Activated T-helper 1 cell treated with anti-CD3 and anti-CD28 coated beads, Interleukin-12 subunit alpha, Interleukin-12 subunit beta, Interleukin-2, Interleukin-4 antibody, amounts not matched to agents 30 ng/mL and 10 ng/mL and 1 ng/mL, durations not matched to agents 14 hours and 24 hours and 36 hours (primary cell): ENCODE measurements at regions of chr1 and their contacts with region 1.

Region 1: GRCh38 chr1:246566128-246566812 is at the starts of genes CNST and TFB2M:
- DNase-seq: peak; percentile 93
- H3K4me3 Mint-ChIP-seq: peak within 1 kb of the TSS; percentile 98
- H3K27ac Mint-ChIP-seq: peak within 1 kb of the TSS; percentile 99
- H3K4me1 Mint-ChIP-seq: peaks cover 48% of the 10 kb centered on the region
- H3K27me3 Mint-ChIP-seq: no peaks in the 10 kb centered on the region
- total RNA-seq, gene CNST: 27.0 and 30.8 TPM in 2 replicates
- total RNA-seq, gene TFB2M: 24.8 and 30.9 TPM in 2 replicates

Region 2: GRCh38 chr1:244835276-244836134 is 1730.8 kb before region 1 on chr1 and contains the start of gene COX20:
- intact Hi-C with region 1: loop called (anchors 1 kb)
- DNase-seq: peak; percentile 85
- H3K4me3 Mint-ChIP-seq: peak within 1 kb of the TSS; percentile 96
- H3K27ac Mint-ChIP-seq: peak within 1 kb of the TSS; percentile 99
- H3K4me1 Mint-ChIP-seq: peaks cover 56% of the 10 kb centered on the region
- H3K27me3 Mint-ChIP-seq: no peaks in the 10 kb centered on the region
- total RNA-seq, gene COX20: 27.4 and 27.6 TPM in 2 replicates

Region 3: GRCh38 chr1:245953876-245954660 is 612.2 kb before region 1 on chr1:
- intact Hi-C with region 1: loop called (anchors 5 kb)
- DNase-seq: no peak
- H3K4me3 Mint-ChIP-seq: peak overlapping the region; percentile 75
- H3K27ac Mint-ChIP-seq: peak overlapping the region; percentile 88
- H3K4me1 Mint-ChIP-seq: peaks cover 26% of the 10 kb centered on the region
- H3K27me3 Mint-ChIP-seq: no peaks in the 10 kb centered on the region

Region 4: GRCh38 chr1:246554201-246554600 is 12.1 kb before region 1 on chr1:
- intact Hi-C with region 1: no loop called
- DNase-seq: no peak
- H3K4me3 Mint-ChIP-seq: no peak overlapping the region
- H3K27ac Mint-ChIP-seq: no peak overlapping the region
- H3K4me1 Mint-ChIP-seq: peaks cover 5% of the 10 kb centered on the region
- H3K27me3 Mint-ChIP-seq: no peaks in the 10 kb centered on the region

Region 5: GRCh38 chr1:246608616-246609376 is 42.5 kb after region 1 on chr1:
- intact Hi-C with region 1: loop called (anchors 2 kb)
- DNase-seq: no peak
- H3K4me3 Mint-ChIP-seq: no peak overlapping the region
- H3K27ac Mint-ChIP-seq: peak overlapping the region; percentile 18
- H3K4me1 Mint-ChIP-seq: peaks cover 20% of the 10 kb centered on the region
- H3K27me3 Mint-ChIP-seq: peaks cover 3% of the 10 kb centered on the region

Region 6: GRCh38 chr1:246931549-246932365 is 365.5 kb after region 1 on chr1 and contains the start of gene AHCTF1:
- intact Hi-C with region 1: loop called (anchors 1 kb)
- DNase-seq: peak; percentile 93
- H3K4me3 Mint-ChIP-seq: peak within 1 kb of the TSS; percentile 93
- H3K27ac Mint-ChIP-seq: peak within 1 kb of the TSS; percentile 97
- H3K4me1 Mint-ChIP-seq: peaks cover 24% of the 10 kb centered on the region
- H3K27me3 Mint-ChIP-seq: peaks cover 6% of the 10 kb centered on the region
- total RNA-seq, gene AHCTF1: 56.1 and 60.5 TPM in 2 replicates

Region 7: GRCh38 chr1:247407180-247407616 is 840.9 kb after region 1 on chr1:
- intact Hi-C with region 1: loop called (anchors 5 kb)
- DNase-seq: peak; percentile 35
- H3K4me3 Mint-ChIP-seq: peak overlapping the region; percentile 40
- H3K27ac Mint-ChIP-seq: peak overlapping the region; percentile 27
- H3K4me1 Mint-ChIP-seq: peaks cover 34% of the 10 kb centered on the region
- H3K27me3 Mint-ChIP-seq: peaks cover 32% of the 10 kb centered on the region